OCI-LY7 (cell line): ENCODE measurements at regions of chr2 and their contacts with region 1.

Region 1: DNA sequence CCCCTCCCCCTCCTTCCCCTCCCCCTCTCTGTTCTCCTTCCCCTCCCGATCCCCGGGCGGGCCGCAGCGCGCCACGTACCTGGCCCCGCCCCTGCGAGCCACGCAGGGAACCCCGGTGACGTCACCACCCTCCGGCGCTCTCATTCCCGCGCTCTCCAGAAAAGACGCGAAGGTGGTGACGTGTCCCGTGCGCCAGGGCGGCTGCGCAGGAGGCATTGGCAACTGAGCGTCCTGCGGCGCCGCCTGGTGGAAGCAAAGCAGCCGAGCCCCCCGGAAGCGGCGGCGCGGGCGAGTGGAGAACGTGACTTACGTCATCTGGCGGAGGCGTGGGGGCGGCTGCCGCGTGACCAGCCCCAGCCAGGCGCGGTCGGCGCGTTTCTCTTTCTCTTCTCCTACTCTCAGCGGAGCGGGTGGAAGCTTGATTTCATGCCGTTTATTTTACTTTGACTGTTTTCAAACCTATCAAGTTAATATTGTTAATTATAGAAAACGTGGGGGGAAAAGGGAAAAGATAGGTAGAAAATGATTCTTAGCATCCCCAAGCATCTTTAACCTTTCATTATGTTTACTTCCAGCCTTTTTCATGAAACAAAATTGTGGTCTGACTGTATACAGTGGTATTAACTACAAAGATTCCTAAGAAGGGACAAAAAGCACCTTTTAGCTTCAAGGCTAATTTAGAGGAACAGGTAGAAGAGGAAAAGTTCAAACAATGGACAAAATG is 48.1 kb downstream of the C2orf42 start:
- DNase-seq: peak; percentile 100
- H3K4me3 ChIP-seq: peak overlapping the region; percentile 71
- H3K27ac ChIP-seq: peak overlapping the region; percentile 73
- H3K4me1 ChIP-seq: peaks cover 25% of the 10 kb centered on the region
- CTCF ChIP-seq: peak; percentile 84

Region 2: DNA sequence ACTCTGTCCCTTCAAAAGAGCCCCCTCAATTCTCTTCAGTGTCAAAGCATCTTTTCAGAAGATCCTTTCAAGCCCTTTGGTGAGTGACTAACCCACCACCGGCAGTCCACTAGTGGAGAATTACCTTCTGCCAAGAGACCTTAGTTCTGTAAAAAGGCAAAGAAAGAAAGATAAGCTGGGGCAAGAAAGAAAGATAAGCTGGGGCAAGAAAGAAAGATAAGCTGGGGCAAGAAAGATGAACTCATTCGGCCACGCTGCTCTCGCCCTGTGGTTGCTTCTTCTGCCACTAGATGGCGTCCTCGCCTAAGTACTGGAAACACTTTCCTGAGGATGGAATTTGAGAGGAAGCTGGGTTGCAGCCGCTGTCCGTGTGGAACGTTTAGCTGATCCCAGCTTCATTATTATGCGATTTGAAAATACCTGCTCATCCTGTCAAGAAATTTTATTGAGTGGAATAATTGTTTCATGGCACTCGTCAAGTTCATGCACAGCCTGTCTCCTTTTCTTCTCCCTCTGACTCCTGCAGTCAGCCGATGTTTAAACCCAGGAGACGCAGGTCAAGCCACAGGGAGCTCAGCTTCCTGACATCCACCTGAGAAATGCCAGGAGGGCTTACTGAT is 418.1 kb before region 1 on chr2:
- CTCF ChIA-PET with region 1: no interaction called
- POLR2A ChIA-PET with region 1: no interaction called
- intact Hi-C with region 1: loop called (anchors 2 kb)
- DNase-seq: peak; percentile 79
- H3K4me3 ChIP-seq: peak overlapping the region; percentile 54
- H3K27ac ChIP-seq: no peak overlapping the region
- H3K4me1 ChIP-seq: no peaks in the 10 kb centered on the region
- CTCF ChIP-seq: peak; percentile 91

Region 3: GRCh38 chr2:70104231-70105111 is 38.3 kb before region 1 on chr2:
- CTCF ChIA-PET with region 1: interaction called, 3 read pairs
- POLR2A ChIA-PET with region 1: interaction called, 6 read pairs
- intact Hi-C with region 1: loop called (anchors 1 kb)
- DNase-seq: peak; percentile 83
- H3K4me3 ChIP-seq: peak overlapping the region; percentile 61
- H3K27ac ChIP-seq: peak overlapping the region; percentile 88
- H3K4me1 ChIP-seq: peaks cover 64% of the 10 kb centered on the region
- CTCF ChIP-seq: no peak

Region 4: GRCh38 chr2:70124983-70125480 is 17.7 kb before region 1 on chr2:
- CTCF ChIA-PET with region 1: no interaction called
- POLR2A ChIA-PET with region 1: interaction called, 129 read pairs
- intact Hi-C with region 1: loop called (anchors 1 kb)
- DNase-seq: peak; percentile 65
- H3K4me3 ChIP-seq: peak overlapping the region; percentile 63
- H3K27ac ChIP-seq: peak overlapping the region; percentile 83
- H3K4me1 ChIP-seq: peaks cover 89% of the 10 kb centered on the region
- CTCF ChIP-seq: no peak

Region 5: GRCh38 chr2:70132244-70133126 is 10.3 kb before region 1 on chr2:
- CTCF ChIA-PET with region 1: no interaction called
- POLR2A ChIA-PET with region 1: interaction called, 10 read pairs
- intact Hi-C with region 1: no loop called
- DNase-seq: peak; percentile 73
- H3K4me3 ChIP-seq: peak overlapping the region; percentile 67
- H3K27ac ChIP-seq: peak overlapping the region; percentile 93
- H3K4me1 ChIP-seq: peaks cover 80% of the 10 kb centered on the region
- CTCF ChIP-seq: 0 out of 2 replicates have a peak, but pooled peaks have one; percentile 22

Region 6: GRCh38 chr2:70190418-70191243 is 47.9 kb after region 1 on chr2 and contains the start of gene C2orf42:
- CTCF ChIA-PET with region 1: no interaction called
- POLR2A ChIA-PET with region 1: interaction called, 4 read pairs
- intact Hi-C with region 1: loop called (anchors 2 kb)
- DNase-seq: peak; percentile 99
- H3K4me3 ChIP-seq: peak within 1 kb of the TSS; percentile 83
- H3K27ac ChIP-seq: peak within 1 kb of the TSS; percentile 89
- H3K4me1 ChIP-seq: peaks cover 8% of the 10 kb centered on the region
- CTCF ChIP-seq: no peak; the same call in 1 of the 2 replicates
- total RNA-seq, gene C2orf42: 24.5 and 26.8 TPM in 2 replicates

Region 7: GRCh38 chr2:70248181-70248847 is 105.6 kb after region 1 on chr2 and contains the start of gene TIA1:
- CTCF ChIA-PET with region 1: no interaction called
- POLR2A ChIA-PET with region 1: no interaction called
- intact Hi-C with region 1: loop called (anchors 5 kb)
- DNase-seq: peak; percentile 100
- H3K4me3 ChIP-seq: peak within 1 kb of the TSS; percentile 86
- H3K27ac ChIP-seq: peak within 1 kb of the TSS; percentile 86
- H3K4me1 ChIP-seq: peaks cover 29% of the 10 kb centered on the region
- CTCF ChIP-seq: no peak
- total RNA-seq, gene TIA1: 129 and 147 TPM in 2 replicates

Region 8: GRCh38 chr2:70357684-70358071 is 214.9 kb after region 1 on chr2:
- CTCF ChIA-PET with region 1: no interaction called
- POLR2A ChIA-PET with region 1: no interaction called
- intact Hi-C with region 1: no loop called
- DNase-seq: no peak
- H3K4me3 ChIP-seq: no peak overlapping the region
- H3K27ac ChIP-seq: no peak overlapping the region
- H3K4me1 ChIP-seq: no peaks in the 10 kb centered on the region
- CTCF ChIP-seq: no peak